ENCODE measurements at regions of chr13 and their contacts with region 1.

Region 1: DNA sequence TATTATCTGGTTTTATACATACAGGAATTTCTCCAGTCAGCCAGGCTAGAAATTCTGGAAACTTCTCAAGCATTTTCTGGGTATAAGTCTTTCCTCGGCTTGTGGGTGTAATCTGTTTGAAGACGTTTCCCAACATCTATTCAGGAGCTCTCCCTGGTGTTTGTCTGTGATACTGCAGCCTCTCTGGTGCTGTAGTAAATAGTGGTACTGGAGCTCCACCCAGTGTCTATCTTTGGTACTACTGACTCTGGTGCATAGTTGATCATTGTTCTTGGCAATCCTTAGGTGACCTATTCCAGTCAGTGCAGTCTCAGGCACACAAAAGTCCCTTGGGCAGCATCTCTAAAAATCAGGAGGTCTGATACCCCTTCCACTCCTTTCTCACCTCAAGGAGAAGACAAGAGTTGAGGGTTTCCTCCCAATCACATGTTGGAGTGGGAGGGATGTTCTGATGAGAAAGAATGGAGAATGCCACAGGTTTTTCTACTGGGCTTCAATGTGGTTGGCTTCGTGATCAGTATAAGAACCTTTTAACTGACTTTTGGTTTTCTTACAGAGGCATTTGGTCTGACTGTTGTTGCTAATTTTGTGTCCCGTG is 115.5 kb downstream of the CYSLTR2 start:
- DNase-seq: peak; percentile 89
- H3K4me3 ChIP-seq: no peak overlapping the region
- H3K27ac ChIP-seq: no peak overlapping the region
- H3K4me1 ChIP-seq: no peaks in the 10 kb centered on the region
- CTCF ChIP-seq: peak; percentile 100

Region 2: DNA sequence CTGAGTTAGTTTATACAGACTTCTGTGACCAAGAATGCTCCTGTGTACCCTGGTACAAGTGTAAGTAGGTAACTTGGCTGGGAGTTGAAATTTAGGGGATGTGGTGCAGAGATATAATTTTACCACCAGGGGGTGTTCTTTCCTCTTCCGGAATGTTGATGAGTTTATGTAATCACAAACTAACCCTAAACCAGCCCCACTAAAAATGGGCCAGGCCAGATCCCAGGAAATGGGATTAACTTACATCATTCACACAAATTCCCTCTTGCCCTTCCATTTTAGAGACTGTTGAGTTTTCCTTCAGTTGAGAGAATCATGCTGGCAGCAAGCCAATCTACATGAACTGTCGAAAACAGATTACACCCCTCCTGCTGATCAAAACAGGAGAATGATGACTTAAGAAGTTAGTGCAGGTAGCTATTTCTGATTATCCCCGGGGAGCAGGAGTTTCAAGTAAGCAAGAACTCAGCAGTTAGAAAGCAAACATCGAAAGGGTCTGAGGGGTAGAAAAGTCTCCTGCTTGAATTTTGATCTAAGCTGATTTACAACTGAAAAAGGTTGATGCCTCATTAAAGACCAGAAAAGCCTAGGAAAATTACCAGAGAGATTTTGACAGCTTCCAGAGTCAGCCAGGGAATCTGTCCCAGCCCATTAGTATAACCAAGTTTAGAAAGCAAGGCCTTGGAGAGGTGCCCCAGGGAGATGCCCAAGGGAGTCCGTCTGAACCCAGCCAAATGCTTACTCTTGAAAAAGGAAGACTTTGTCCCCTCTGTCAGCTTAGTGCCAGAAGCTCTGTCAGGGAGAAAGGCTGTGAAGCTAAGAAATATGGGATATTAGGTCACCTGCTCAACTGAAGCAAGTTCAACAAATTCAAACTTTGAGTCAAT is 642.0 kb before region 1 on chr13:
- CTCF ChIA-PET with region 1: no interaction called
- POLR2A ChIA-PET with region 1: no interaction called
- intact Hi-C with region 1: loop called (anchors 2 kb)
- DNase-seq: peak; percentile 72
- H3K4me3 ChIP-seq: no peak overlapping the region
- H3K27ac ChIP-seq: no peak overlapping the region
- H3K4me1 ChIP-seq: peaks cover 4% of the 10 kb centered on the region
- CTCF ChIP-seq: peak; percentile 96

Region 3: GRCh38 chr13:48334534-48335127 is 434.6 kb before region 1 on chr13:
- CTCF ChIA-PET with region 1: no interaction called
- POLR2A ChIA-PET with region 1: interaction called, 6 read pairs
- intact Hi-C with region 1: loop called (anchors 1 kb)
- DNase-seq: peak; percentile 65
- H3K4me3 ChIP-seq: no peak overlapping the region
- H3K27ac ChIP-seq: no peak overlapping the region
- H3K4me1 ChIP-seq: no peaks in the 10 kb centered on the region
- CTCF ChIP-seq: peak; percentile 99

Region 4: GRCh38 chr13:48595431-48596429 is 173.5 kb before region 1 on chr13:
- CTCF ChIA-PET with region 1: no interaction called
- POLR2A ChIA-PET with region 1: interaction called, 6 read pairs
- intact Hi-C with region 1: loop called (anchors 1 kb)
- DNase-seq: peak; percentile 68
- H3K4me3 ChIP-seq: no peak overlapping the region
- H3K27ac ChIP-seq: no peak overlapping the region
- H3K4me1 ChIP-seq: no peaks in the 10 kb centered on the region
- CTCF ChIP-seq: peak; percentile 85

Region 5: GRCh38 chr13:49042476-49042875 is 273.3 kb after region 1 on chr13:
- CTCF ChIA-PET with region 1: no interaction called
- POLR2A ChIA-PET with region 1: no interaction called
- intact Hi-C with region 1: no loop called
- DNase-seq: no peak
- H3K4me3 ChIP-seq: no peak overlapping the region
- H3K27ac ChIP-seq: no peak overlapping the region
- H3K4me1 ChIP-seq: no peaks in the 10 kb centered on the region
- CTCF ChIP-seq: no peak